ENCODE measurements at regions of chr7 and their contacts with region 1.

Region 1: DNA sequence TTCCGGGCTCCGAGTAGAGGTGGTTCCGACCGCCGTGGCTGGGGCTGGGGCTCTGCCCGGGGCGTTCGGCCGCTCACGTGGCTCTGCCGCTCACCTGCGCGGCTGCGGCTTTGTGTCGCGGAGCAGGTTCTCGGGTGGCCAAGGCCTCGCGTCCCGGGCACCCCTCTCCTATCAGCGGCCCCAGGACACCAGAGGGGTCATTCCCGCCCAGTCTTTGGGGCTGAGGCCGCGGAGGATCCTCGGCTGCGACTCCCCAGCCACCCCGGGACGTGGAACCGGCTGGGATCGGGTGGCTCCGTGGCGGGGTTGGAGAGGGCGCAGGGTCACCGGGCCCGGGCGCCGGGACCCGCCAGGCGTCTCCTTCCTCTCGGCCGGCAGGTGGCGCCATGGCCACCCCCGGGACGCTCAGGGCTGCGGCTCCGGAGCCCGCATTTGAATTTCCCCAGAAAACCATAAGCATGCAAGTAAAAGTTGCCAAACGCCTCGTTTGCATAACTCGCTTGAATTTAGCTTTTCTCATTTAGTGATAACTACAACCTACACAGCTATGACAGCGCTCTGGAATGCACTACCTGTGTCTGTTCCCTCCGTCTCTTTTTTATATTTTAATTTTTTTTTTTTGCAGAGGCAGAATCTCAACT is 1.2 kb downstream of the COL26A1 start:
- DNase-seq: peak; percentile 76
- H3K4me3 Mint-ChIP-seq: no peak overlapping the region
- H3K27ac Mint-ChIP-seq: no peak overlapping the region
- H3K4me1 Mint-ChIP-seq: peaks cover 3% of the 10 kb centered on the region
- H3K27me3 Mint-ChIP-seq: peaks cover 12% of the 10 kb centered on the region

Region 2: DNA sequence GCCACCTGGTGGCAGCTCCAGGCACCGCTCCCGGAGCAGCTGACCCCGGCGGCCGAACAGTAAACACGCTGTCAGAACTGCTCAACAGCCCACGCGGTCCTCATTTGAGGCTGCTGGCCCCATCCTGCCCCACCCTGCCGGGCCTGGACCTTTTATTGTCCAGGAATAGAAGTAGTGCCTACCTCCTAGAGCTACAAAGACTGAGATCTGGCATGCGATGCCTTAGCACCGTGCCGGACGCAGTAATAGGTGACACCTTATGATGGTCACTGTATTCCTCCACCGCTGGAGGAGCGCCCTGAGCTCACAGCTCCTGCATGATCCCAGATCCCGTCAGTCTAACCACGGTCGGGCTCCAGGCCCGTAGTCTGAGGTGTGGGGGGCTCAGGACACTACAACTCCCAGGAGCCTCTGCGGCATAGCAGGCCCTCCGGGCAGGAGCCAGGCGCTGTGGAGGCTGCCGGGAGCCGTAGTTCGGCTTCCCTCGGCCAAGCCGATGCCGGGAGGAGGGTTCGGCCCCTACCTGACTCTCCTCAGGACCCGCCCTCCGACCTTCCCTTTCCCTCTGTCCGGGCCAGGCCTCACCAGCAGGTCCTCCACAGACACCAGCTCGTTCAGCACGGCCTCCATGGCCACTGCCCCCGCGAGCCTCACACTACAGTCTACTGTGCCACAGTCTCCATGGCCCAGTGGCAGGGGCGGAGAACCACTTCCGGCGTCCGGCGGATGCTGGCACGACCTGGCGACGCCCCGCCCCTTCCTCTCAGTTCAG is 119.3 kb before region 1 on chr7 and contains the start of gene FIS1:
- CTCF ChIA-PET with region 1: no interaction called
- intact Hi-C with region 1: no loop called
- DNase-seq: peak; percentile 94
- H3K4me3 Mint-ChIP-seq: peak within 1 kb of the TSS; percentile 99
- H3K27ac Mint-ChIP-seq: peak within 1 kb of the TSS; percentile 96
- H3K4me1 Mint-ChIP-seq: peaks cover 37% of the 10 kb centered on the region
- H3K27me3 Mint-ChIP-seq: no peaks in the 10 kb centered on the region
- total RNA-seq, gene FIS1: 84.2 to 84.3 TPM

Region 3: GRCh38 chr7:101373812-101374614 is 10.2 kb after region 1 on chr7:
- CTCF ChIA-PET with region 1: interaction called, 11 read pairs
- intact Hi-C with region 1: no loop called
- DNase-seq: no peak
- H3K4me3 Mint-ChIP-seq: no peak overlapping the region
- H3K27ac Mint-ChIP-seq: no peak overlapping the region
- H3K4me1 Mint-ChIP-seq: peaks cover 6% of the 10 kb centered on the region
- H3K27me3 Mint-ChIP-seq: no peaks in the 10 kb centered on the region

Region 4: GRCh38 chr7:101410743-101411507 is 47.1 kb after region 1 on chr7:
- CTCF ChIA-PET with region 1: interaction called, 26 read pairs
- intact Hi-C with region 1: loop called (anchors 1 kb)
- DNase-seq: peak; percentile 54
- H3K4me3 Mint-ChIP-seq: no peak overlapping the region
- H3K27ac Mint-ChIP-seq: no peak overlapping the region
- H3K4me1 Mint-ChIP-seq: peaks cover 8% of the 10 kb centered on the region
- H3K27me3 Mint-ChIP-seq: no peaks in the 10 kb centered on the region

Region 5: GRCh38 chr7:101436857-101437576 is 73.2 kb after region 1 on chr7:
- CTCF ChIA-PET with region 1: interaction called, 17 read pairs
- intact Hi-C with region 1: loop called (anchors 1 kb)
- DNase-seq: no peak
- H3K4me3 Mint-ChIP-seq: no peak overlapping the region
- H3K27ac Mint-ChIP-seq: no peak overlapping the region
- H3K4me1 Mint-ChIP-seq: peaks cover 2% of the 10 kb centered on the region
- H3K27me3 Mint-ChIP-seq: peaks cover 8% of the 10 kb centered on the region

Region 6: DNA sequence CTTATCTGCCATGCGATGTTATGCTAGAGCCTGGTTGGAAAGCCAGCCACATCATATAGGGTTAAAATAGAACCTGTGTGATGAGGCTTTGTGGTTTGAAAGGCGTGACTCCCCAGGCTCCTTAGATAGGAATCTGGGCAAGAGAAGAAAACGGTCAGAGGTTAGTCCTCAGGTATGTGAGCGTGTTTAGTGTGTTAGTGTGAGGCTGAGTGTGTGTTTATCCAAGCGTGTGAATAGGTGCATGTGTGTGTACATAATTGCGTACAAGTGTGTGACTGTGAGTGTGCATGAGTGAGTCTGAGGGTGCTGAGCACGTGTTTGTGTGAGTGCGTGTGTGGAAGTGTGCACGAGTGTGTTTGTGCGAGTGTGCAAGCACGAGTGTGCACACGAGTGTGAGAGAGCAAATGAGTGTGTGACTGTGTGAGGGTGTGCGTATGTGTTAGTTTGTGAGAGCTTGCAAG is 78.7 kb after region 1 on chr7:
- CTCF ChIA-PET with region 1: interaction called, 17 read pairs
- intact Hi-C with region 1: loop called (anchors 1 kb)
- DNase-seq: no peak
- H3K4me3 Mint-ChIP-seq: no peak overlapping the region
- H3K27ac Mint-ChIP-seq: no peak overlapping the region
- H3K4me1 Mint-ChIP-seq: peaks cover 9% of the 10 kb centered on the region
- H3K27me3 Mint-ChIP-seq: peaks cover 6% of the 10 kb centered on the region

Region 7: GRCh38 chr7:101678658-101679057 is 314.8 kb after region 1 on chr7:
- CTCF ChIA-PET with region 1: no interaction called
- intact Hi-C with region 1: no loop called
- DNase-seq: no peak
- H3K4me3 Mint-ChIP-seq: no peak overlapping the region
- H3K27ac Mint-ChIP-seq: no peak overlapping the region
- H3K4me1 Mint-ChIP-seq: no peaks in the 10 kb centered on the region
- H3K27me3 Mint-ChIP-seq: no peaks in the 10 kb centered on the region

Measured in activated naive CD4-positive, alpha-beta T cell treated with anti-CD3 and anti-CD28 coated beads for 36 hours (primary cell).